RWPE1 (cell line): ENCODE measurements at regions of chr14 and their contacts with region 1.

Region 1: GRCh38 chr14:92568621-92569479 is 55.3 kb downstream of the RIN3 start:
- DNase-seq: no peak
- H3K27ac ChIP-seq: no peak overlapping the region
- CTCF ChIP-seq: no peak

Region 2: DNA sequence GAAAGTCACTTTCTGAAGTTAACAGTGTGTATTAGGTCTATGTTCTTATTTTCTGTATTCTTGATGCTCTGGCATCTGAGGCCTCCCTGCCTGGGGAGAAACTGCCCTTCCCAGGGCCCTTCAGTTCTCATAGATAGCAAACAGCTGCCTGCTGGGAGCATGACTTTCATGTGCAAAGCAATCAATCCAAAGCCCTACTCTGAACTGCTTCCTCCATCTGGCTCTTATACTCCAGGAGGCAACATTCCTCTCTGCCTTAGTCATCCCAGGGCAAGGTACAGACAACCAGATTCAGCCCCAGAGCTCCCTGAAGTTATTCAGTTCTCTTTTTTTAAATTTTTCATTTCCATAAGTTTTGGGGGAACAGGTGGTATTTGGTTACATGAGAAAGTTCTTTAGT is 96.9 kb before region 1 on chr14:
- CTCF ChIA-PET with region 1: no interaction called
- POLR2A ChIA-PET with region 1: no interaction called
- DNase-seq: peak; percentile 90
- H3K27ac ChIP-seq: no peak overlapping the region
- CTCF ChIP-seq: no peak

Region 3: GRCh38 chr14:93163570-93163969 is 594.7 kb after region 1 on chr14:
- CTCF ChIA-PET with region 1: interaction called, 10 read pairs
- POLR2A ChIA-PET with region 1: no interaction called
- DNase-seq: no peak
- H3K27ac ChIP-seq: no peak overlapping the region
- CTCF ChIP-seq: no peak